ENCODE measurements at regions of chr16 and their contacts with region 1.

Region 1: DNA sequence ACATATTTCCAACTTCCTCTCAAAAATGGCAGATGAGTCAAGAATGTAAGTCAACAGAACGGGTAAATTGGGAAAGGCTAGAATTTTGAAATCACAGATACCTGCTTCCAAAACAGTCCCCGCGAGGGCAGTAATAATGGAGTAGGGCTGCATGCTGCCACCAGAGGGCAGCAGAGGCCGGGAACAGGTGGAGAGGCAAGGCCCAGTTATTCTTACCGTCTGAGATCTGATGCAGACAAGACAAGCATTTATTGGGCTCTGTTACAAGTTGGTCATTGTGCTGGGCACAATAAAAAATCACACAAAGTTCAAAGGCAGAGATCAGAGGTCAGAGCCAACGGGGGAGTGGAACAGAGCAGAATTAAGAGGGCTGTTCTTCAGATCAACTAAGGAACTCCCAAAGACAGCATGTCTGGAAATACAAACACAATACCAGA is 8.8 kb upstream of the MLKL start:
- H3K4me3 Mint-ChIP-seq: no peak overlapping the region
- H3K27ac Mint-ChIP-seq: no peak overlapping the region
- H3K4me1 Mint-ChIP-seq: peaks cover 23% of the 10 kb centered on the region
- H3K27me3 Mint-ChIP-seq: no peaks in the 10 kb centered on the region

Region 2: GRCh38 chr16:74726716-74727115 is 17.3 kb after region 1 on chr16:
- intact Hi-C with region 1: loop called (anchors 2 kb)
- H3K4me3 Mint-ChIP-seq: no peak overlapping the region
- H3K27ac Mint-ChIP-seq: no peak overlapping the region
- H3K4me1 Mint-ChIP-seq: peaks cover 14% of the 10 kb centered on the region
- H3K27me3 Mint-ChIP-seq: peaks cover 16% of the 10 kb centered on the region

Region 3: GRCh38 chr16:74862741-74863244 is 153.3 kb after region 1 on chr16:
- intact Hi-C with region 1: loop called (anchors 1 kb)
- H3K4me3 Mint-ChIP-seq: no peak overlapping the region
- H3K27ac Mint-ChIP-seq: no peak overlapping the region
- H3K4me1 Mint-ChIP-seq: peaks cover 9% of the 10 kb centered on the region
- H3K27me3 Mint-ChIP-seq: peaks cover 6% of the 10 kb centered on the region

Measured in dendritic cell treated with granulocyte-macrophage colony-stimulating factor and Interleukin-4, amounts not matched to agents 40 ng/mL and 50 ng/mL, for 4 days (primary cell).